Esophagus squamous epithelium (tissue), 5 donors: ENCODE measurements at regions of chr7 and their contacts with region 1.

Region 1: GRCh38 chr7:50418086-50418515 is 32.0 kb downstream of the FIGNL1 start:
- DNase-seq: peak; percentile 12
- H3K4me3 ChIP-seq: no peak overlapping the region
- H3K27ac ChIP-seq: no peak overlapping the region
- H3K4me1 ChIP-seq: peaks cover 2 to 5% (median 3%) of the 10 kb centered on the region in 3 donors
- H3K27me3 ChIP-seq: no peaks in the 10 kb centered on the region
- CTCF ChIP-seq: peak; percentile 79 to 89 (median 82)
- POLR2A ChIP-seq: no peak

Region 2: GRCh38 chr7:50206453-50207250 is 211.4 kb before region 1 on chr7:
- intact Hi-C with region 1: loop called (anchors 5 kb)
- DNase-seq: no peak
- H3K4me3 ChIP-seq: no peak overlapping the region
- H3K27ac ChIP-seq: no peak overlapping the region
- H3K4me1 ChIP-seq: no peaks in the 10 kb centered on the region
- H3K27me3 ChIP-seq: peaks cover 0 to 9% (median 0%) of the 10 kb centered on the region in 4 donors
- CTCF ChIP-seq: no peak
- POLR2A ChIP-seq: no peak